MCF 10A (cell line): ENCODE measurements at regions of chr11 and their contacts with region 1.

Region 1: GRCh38 chr11:74570266-74571061 is 21.9 kb upstream of the POLD3 start:
- DNase-seq: peak; percentile 71
- H3K4me3 Mint-ChIP-seq: no peak overlapping the region
- H3K27ac Mint-ChIP-seq: no peak overlapping the region
- H3K4me1 Mint-ChIP-seq: no peaks in the 10 kb centered on the region
- H3K27me3 Mint-ChIP-seq: no peaks in the 10 kb centered on the region
- CTCF ChIP-seq: peak; percentile 83

Region 2: DNA sequence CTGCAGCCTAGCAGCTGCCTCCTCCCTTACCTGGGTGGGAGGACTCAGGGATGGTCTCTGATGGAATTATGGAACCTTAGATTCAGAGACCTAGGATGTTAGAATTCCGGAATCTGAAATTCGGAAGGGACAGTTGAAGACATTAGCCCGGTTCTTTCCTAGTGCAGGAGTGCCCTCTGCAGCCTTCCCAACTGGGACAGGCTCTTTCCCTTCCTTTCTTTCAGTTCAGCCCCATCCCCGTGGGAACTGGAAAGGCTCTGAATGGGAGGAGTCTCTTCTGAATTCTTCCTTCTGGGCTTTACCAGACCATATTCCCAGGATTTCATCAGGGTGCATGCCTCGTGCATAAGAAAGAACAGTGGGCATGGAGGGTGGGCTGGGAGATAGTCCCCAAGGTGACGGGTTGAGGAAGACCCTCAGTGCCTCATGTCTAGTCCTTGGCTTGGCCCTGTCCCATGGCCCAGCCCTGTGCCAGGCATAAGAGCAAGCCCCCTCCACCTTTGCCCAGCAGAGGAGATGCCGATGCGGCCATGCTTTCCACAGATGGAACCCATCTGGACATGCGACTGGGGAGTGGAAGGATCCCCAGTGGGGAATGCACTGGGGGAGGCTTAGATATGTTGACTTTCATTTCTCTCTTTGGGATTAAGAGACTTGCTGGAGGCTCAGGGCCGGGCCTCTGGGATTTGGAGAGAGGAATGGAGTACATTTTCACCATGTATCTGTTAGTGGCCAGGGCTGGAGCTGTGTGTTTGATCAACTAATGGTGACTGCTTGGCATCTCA is 605.2 kb before region 1 on chr11:
- CTCF ChIA-PET with region 1: interaction called, 3 read pairs
- POLR2A ChIA-PET with region 1: no interaction called
- intact Hi-C with region 1: loop called (anchors 5 kb)
- DNase-seq: no peak
- H3K4me3 Mint-ChIP-seq: no peak overlapping the region
- H3K27ac Mint-ChIP-seq: no peak overlapping the region
- H3K4me1 Mint-ChIP-seq: peaks cover 7% of the 10 kb centered on the region
- H3K27me3 Mint-ChIP-seq: peaks cover 8% of the 10 kb centered on the region
- CTCF ChIP-seq: no peak

Region 3: DNA sequence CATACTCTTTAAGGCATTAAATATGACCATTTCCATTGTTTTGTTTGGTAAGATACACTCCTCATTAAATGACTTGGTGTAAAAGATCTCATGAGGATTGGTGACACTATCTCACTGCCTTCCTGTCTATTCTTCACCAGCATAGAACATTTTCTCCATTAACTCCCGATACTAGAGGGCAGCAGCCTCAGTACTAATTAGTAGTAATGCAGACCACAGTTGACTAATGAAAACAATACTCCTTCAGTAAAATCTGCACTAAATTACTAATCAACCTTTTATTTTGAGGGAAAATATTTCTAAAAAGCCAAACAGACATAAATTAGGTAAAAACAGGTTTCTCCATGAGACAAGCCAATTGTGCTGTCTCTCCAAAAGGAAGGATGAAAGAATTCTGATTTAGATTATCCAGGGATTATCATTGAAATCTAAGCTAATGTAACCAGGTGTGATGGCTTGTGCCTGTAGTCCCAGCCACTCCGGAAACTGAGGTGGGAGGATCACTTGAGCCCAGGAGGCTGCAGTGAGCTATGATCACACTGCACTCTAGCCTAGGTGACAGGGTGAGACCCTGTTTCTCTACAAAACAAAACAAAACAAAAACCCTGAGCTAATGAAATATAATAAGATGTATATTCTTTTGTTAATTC is 181.7 kb before region 1 on chr11:
- CTCF ChIA-PET with region 1: interaction called, 25 read pairs
- POLR2A ChIA-PET with region 1: no interaction called
- intact Hi-C with region 1: loop called (anchors 10 kb)
- DNase-seq: peak; percentile 63
- H3K4me3 Mint-ChIP-seq: no peak overlapping the region
- H3K27ac Mint-ChIP-seq: no peak overlapping the region
- H3K4me1 Mint-ChIP-seq: peaks cover 14% of the 10 kb centered on the region
- H3K27me3 Mint-ChIP-seq: no peaks in the 10 kb centered on the region
- CTCF ChIP-seq: peak; percentile 52

Region 4: GRCh38 chr11:74492974-74493790 is 77.3 kb before region 1 on chr11 and contains the start of gene LIPT2:
- CTCF ChIA-PET with region 1: interaction called, 12 read pairs
- POLR2A ChIA-PET with region 1: interaction called, 23 read pairs
- intact Hi-C with region 1: no loop called
- DNase-seq: peak; percentile 98
- H3K4me3 Mint-ChIP-seq: peak within 1 kb of the TSS; percentile 82
- H3K27ac Mint-ChIP-seq: peak within 1 kb of the TSS; percentile 67
- H3K4me1 Mint-ChIP-seq: peaks cover 11% of the 10 kb centered on the region
- H3K27me3 Mint-ChIP-seq: no peaks in the 10 kb centered on the region
- CTCF ChIP-seq: no peak
- total RNA-seq, gene LIPT2: 3.0 and 7.9 TPM in 2 replicates

Region 5: GRCh38 chr11:74559110-74559933 is 11.1 kb before region 1 on chr11:
- CTCF ChIA-PET with region 1: interaction called, 20 read pairs
- POLR2A ChIA-PET with region 1: no interaction called
- intact Hi-C with region 1: no loop called
- DNase-seq: no peak
- H3K4me3 Mint-ChIP-seq: no peak overlapping the region
- H3K27ac Mint-ChIP-seq: no peak overlapping the region
- H3K4me1 Mint-ChIP-seq: no peaks in the 10 kb centered on the region
- H3K27me3 Mint-ChIP-seq: no peaks in the 10 kb centered on the region
- CTCF ChIP-seq: no peak

Region 6: DNA sequence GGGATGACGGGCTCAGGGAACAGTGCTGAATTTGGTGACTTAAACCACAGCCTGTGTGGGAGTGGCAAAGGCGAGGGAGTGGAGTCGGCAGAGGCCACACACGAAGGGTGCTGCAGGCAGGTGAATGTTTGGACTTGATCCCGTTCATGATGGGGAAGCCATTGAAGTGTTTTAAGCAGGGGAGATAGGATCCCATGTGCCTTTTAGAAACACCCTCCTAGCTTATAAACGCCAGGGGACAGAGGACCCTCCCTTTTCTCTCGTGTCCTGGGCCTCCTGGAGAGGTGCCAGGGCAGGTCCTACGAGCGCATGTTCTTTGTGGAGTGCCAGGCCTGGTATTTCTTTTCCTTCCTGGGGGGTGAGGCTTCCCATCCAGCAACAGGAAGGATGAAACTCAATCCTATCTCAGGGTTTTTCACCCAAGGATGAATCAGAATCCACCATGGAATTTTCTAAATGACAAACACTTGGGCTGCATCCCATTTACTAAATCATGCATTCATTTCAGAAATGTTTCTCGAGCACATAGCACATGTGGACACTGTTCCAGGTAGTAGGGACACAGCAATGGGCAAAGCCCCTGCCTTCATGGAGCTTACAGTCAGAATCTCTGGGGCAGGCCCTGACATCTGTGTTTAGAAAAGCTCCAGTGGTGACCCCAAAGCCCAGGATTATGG is 101.2 kb after region 1 on chr11:
- CTCF ChIA-PET with region 1: no interaction called
- POLR2A ChIA-PET with region 1: no interaction called
- intact Hi-C with region 1: no loop called
- DNase-seq: peak; percentile 51
- H3K4me3 Mint-ChIP-seq: no peak overlapping the region
- H3K27ac Mint-ChIP-seq: peak overlapping the region; percentile 73
- H3K4me1 Mint-ChIP-seq: peaks cover 20% of the 10 kb centered on the region
- H3K27me3 Mint-ChIP-seq: no peaks in the 10 kb centered on the region
- CTCF ChIP-seq: no peak